Activated T-helper 1 cell treated with anti-CD3 and anti-CD28 coated beads, Interleukin-12 subunit alpha, Interleukin-12 subunit beta, Interleukin-2, Interleukin-4 antibody, amounts not matched to agents 30 ng/mL and 10 ng/mL and 1 ng/mL, durations not matched to agents 14 hours and 24 hours and 36 hours (primary cell): ENCODE measurements at regions of chr9 and their contacts with region 1.

Region 1: GRCh38 chr9:21965401-21965951 is 28.7 kb downstream of the CDKN2A start:
- DNase-seq: peak; percentile 39
- H3K4me3 Mint-ChIP-seq: peak overlapping the region; percentile 43
- H3K27ac Mint-ChIP-seq: peak overlapping the region; percentile 42
- H3K4me1 Mint-ChIP-seq: peaks cover 51% of the 10 kb centered on the region
- H3K27me3 Mint-ChIP-seq: peaks cover 80% of the 10 kb centered on the region

Region 2: DNA sequence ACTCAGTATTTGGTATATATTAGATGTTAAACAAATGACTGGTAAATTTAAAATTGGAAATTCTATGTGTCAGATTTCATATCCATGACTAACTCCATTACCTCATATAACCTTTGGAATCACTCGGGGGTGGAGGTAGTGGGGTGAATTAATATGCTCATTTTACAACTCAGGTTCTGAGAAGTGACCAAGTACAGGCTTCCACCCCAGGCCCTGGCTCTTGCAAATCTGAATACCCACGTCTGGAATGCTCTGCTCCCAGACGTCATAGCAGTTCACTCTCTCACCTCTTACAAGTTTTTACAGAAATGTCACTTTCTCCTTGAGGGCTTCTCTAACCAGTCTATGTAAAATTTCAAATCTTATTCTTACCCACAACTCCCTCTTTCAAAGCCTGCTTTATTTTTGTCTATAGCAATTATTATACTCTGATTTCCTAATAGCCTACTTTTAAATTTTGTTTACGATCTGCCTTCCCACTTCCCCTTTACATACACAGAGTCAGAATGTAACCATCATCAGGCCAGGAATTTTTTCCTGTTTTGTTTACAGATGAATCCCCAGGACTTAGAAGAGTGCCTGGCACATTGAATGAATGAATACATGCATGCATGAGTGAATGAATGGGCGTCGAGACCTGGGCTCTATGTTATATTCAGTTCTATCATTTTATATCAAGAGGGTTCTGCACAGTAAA is 349.2 kb before region 1 on chr9:
- intact Hi-C with region 1: no loop called
- DNase-seq: no peak
- H3K4me3 Mint-ChIP-seq: no peak overlapping the region
- H3K27ac Mint-ChIP-seq: no peak overlapping the region
- H3K4me1 Mint-ChIP-seq: peaks cover 32% of the 10 kb centered on the region
- H3K27me3 Mint-ChIP-seq: peaks cover 4% of the 10 kb centered on the region

Region 3: DNA sequence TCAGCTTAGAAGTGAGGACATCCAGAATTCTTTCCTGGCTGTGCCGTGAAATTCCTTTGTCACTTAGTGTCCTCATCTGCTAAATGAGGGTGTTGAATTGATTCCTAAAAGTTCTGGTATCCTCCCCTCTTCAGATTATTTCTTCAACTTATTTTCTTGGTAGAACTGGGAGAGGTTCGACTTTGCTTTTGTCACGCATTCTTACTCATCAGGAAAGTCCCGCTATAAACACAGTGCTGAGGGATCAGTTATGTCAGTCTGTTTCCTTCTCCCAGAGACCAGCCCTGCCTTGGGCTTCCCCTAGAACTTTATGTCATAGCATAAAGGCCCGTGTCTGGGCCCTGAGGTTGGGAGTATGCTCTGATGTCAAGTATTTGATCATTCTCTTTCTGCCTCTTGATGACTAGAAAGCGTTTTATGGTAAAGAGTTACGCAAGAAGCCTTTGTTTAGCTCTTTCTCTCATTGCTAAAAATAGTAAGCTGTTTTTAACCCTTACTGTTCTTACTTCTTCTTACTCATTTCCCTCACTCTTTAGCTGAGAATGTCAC is 133.4 kb before region 1 on chr9:
- intact Hi-C with region 1: loop called (anchors 5 kb)
- DNase-seq: peak; percentile 66
- H3K4me3 Mint-ChIP-seq: peak overlapping the region; percentile 20
- H3K27ac Mint-ChIP-seq: peak overlapping the region; percentile 73
- H3K4me1 Mint-ChIP-seq: peaks cover 73% of the 10 kb centered on the region
- H3K27me3 Mint-ChIP-seq: no peaks in the 10 kb centered on the region

Region 4: GRCh38 chr9:21902136-21902535 is 63.3 kb before region 1 on chr9:
- intact Hi-C with region 1: no loop called
- DNase-seq: no peak
- H3K4me3 Mint-ChIP-seq: no peak overlapping the region
- H3K27ac Mint-ChIP-seq: no peak overlapping the region
- H3K4me1 Mint-ChIP-seq: peaks cover 12% of the 10 kb centered on the region
- H3K27me3 Mint-ChIP-seq: no peaks in the 10 kb centered on the region

Region 5: DNA sequence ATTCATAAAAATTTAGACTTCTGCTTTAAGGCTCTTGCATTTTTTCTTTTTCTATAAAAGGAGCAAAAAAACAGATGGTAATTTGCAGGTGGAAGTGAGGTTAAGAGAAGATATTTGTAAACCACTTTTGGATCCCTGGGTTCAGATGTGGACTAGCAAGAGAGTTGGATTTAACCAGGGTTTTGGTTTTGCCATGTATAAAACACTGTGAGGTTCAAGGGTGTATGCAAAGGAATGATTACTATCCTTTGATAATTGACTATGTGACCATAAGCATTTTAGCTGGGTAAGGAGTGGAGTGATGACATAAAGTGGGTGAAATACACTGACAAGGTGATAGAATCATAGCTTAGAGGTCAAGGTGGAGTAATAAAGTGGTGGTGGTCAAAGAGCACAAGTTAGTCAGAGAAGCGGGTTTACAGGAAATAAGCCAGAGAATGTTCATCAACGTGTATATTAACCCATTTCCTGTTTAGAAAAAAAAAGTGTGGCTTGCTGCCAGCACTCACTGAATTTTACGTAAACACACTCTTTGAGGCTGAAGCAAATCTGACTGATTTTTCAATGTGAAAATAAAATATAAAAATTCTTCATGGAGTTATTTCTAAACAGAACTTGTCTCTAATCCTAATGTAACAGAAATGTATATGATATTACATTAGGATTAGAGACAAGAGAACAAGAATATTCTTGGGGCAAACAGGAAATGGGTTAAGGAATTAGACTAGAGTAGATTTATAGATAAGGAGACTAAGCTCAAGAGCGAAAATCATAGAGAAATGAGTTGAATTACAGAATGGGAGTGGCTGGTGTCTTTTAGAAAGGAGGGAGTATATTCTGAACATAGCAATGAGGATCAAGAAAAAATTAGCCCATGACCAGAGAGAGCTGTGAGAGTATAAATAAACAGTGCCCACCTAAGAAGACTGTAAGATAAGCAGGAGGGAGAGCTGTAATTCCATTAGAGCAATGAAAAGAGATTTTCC is 45.8 kb before region 1 on chr9:
- intact Hi-C with region 1: loop called (anchors 1 kb)
- DNase-seq: peak; percentile 21
- H3K4me3 Mint-ChIP-seq: peak overlapping the region; percentile 59
- H3K27ac Mint-ChIP-seq: peak overlapping the region; percentile 76
- H3K4me1 Mint-ChIP-seq: peaks cover 34% of the 10 kb centered on the region
- H3K27me3 Mint-ChIP-seq: no peaks in the 10 kb centered on the region

Region 6: GRCh38 chr9:21995177-21996086 is 30.0 kb after region 1 on chr9:
- intact Hi-C with region 1: no loop called
- DNase-seq: peak; percentile 80
- H3K4me3 Mint-ChIP-seq: peak overlapping the region; percentile 94
- H3K27ac Mint-ChIP-seq: peak overlapping the region; percentile 97
- H3K4me1 Mint-ChIP-seq: peaks cover 39% of the 10 kb centered on the region
- H3K27me3 Mint-ChIP-seq: peaks cover 45% of the 10 kb centered on the region

Region 7: GRCh38 chr9:22244141-22245011 is 278.9 kb after region 1 on chr9:
- intact Hi-C with region 1: loop called (anchors 2 kb)
- DNase-seq: no peak
- H3K4me3 Mint-ChIP-seq: no peak overlapping the region
- H3K27ac Mint-ChIP-seq: no peak overlapping the region
- H3K4me1 Mint-ChIP-seq: peaks cover 28% of the 10 kb centered on the region
- H3K27me3 Mint-ChIP-seq: peaks cover 61% of the 10 kb centered on the region

Region 8: DNA sequence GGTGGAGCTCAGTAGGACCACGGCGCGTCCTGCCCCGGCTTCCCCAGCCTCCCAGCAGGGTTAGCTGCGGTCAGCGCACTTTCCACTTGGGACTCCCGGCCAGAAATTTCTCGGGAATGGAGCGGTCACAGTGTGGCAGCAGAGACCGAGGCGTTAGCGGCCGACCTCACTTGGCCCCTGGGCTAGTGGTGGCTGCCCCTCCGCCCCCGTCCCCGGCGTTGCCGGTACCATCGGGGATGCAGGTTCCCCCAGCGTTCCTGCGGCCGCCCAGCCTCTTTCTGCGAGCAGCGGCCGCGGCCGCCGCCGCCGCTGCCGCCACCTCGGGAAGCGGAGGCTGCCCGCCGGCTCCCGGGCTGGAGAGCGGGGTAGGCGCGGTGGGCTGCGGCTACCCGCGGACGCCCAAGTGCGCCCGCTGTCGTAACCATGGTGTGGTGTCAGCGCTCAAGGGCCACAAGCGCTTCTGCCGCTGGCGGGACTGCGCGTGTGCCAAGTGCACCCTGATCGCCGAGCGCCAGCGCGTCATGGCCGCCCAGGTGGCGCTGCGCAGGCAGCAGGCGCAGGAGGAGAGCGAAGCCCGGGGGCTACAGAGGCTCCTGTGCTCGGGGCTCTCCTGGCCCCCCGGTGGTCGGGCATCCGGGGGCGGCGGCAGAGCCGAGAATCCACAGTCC is 481.6 kb after region 1 on chr9:
- intact Hi-C with region 1: loop called (anchors 5 kb)
- DNase-seq: no peak
- H3K4me3 Mint-ChIP-seq: no peak overlapping the region
- H3K27ac Mint-ChIP-seq: no peak overlapping the region
- H3K4me1 Mint-ChIP-seq: no peaks in the 10 kb centered on the region
- H3K27me3 Mint-ChIP-seq: peaks cover 37% of the 10 kb centered on the region

Region 9: GRCh38 chr9:23044549-23044948 is 1079.1 kb after region 1 on chr9:
- intact Hi-C with region 1: no loop called
- DNase-seq: no peak
- H3K4me3 Mint-ChIP-seq: no peak overlapping the region
- H3K27ac Mint-ChIP-seq: no peak overlapping the region
- H3K4me1 Mint-ChIP-seq: no peaks in the 10 kb centered on the region
- H3K27me3 Mint-ChIP-seq: no peaks in the 10 kb centered on the region

Region 10: DNA sequence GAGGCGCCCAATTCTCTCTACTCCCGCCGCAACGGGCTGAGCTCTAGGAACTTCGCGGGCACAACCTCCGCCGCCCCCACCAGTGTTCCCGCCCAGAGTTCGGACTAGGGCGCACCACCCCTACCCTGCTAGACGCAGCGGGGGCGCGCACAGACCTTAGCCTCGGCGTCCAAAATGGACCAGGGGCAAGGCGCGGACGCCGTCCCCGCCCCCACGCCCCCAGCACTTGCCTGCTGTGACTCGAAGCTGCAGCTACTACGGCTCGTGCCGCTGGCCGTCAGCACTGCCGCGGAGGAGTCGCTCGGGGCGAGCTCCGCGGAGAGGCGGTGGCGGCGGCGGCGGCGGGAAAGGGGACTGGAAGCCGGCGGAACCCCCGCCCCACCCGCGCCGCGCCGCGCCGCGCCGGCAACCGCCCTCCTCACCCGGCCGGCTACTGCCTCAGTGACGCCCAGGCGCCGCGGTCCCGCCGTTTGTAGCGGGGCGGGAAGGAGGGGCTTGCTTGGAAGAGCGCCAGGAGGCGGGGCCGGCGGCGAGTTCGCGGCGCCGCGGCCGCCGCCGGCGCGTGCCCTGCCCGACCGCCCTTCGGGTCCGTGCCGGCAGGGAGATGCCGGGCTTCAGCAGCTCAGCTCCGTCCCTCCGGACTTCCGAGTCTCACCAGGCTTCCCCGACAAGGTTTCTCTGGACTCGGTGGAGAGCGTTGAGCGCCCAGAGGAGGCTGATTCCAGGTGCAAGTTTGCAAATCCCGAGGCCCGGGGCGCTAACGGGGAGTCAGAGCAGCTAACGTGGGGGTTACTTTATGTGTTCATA is 1856.1 kb after region 1 on chr9:
- intact Hi-C with region 1: loop called (anchors 5 kb)
- DNase-seq: no peak
- H3K4me3 Mint-ChIP-seq: no peak overlapping the region
- H3K27ac Mint-ChIP-seq: no peak overlapping the region
- H3K4me1 Mint-ChIP-seq: no peaks in the 10 kb centered on the region
- H3K27me3 Mint-ChIP-seq: peaks cover 22% of the 10 kb centered on the region